ENCODE measurements at regions of chr16 and their contacts with region 1.

Region 1: DNA sequence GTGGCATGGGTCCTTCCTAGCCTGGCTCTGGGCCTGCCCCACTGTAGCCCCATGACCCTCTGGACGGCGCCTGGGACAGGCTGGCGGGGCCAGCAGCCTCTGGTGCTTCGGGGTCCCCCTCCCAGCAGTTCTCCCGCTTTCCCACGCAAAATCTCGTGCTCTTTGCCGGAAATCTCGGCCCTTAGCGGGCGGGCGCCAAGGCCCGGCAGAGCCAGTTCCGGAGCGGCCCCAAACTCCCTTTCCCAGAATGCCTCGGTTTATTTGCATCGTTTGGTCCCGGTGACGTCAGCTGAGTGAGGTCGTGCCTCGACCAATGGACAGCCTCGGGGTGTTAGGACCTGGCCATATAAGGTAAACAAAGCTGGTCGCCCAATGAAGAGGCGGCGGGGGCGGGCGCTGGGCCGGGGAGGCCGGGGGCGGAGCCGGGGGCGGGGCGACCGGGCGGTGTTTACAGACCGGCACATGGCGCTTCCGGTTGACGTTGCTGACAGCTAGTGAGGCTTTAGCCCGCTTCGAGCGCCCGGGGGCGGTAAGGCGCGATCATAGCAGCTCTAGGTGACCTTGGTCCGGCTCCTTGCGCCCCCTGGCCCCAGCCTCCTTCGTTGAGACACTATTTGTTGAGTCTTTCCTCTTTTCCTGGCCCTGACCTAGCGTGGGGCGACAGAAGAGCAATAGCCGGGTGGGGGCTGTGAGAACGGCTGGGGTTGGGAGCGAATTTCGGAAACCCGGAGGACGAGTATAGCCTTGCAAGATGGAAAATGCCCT is 1.5 kb upstream of the UBALD1 start:
- DNase-seq: peak; percentile 93 to 100 (median 98)
- ATAC-seq: peak; percentile 94
- H3K4me3 ChIP-seq: peak overlapping the region; percentile 95
- H3K4me3 Mint-ChIP-seq: peak overlapping the region; percentile 94 to 99 (median 98)
- H3K27ac ChIP-seq: peak overlapping the region; percentile 98
- H3K27ac Mint-ChIP-seq: peak overlapping the region; percentile 96 to 100 (median 99)
- H3K4me1 ChIP-seq: peaks cover 28 to 37% of the 10 kb centered on the region in 2 donors
- H3K4me1 Mint-ChIP-seq: peaks cover 8 to 43% (median 24%) of the 10 kb centered on the region in 7 donors
- H3K27me3 ChIP-seq: no peaks in the 10 kb centered on the region
- H3K27me3 Mint-ChIP-seq: no peaks in the 10 kb centered on the region

Region 2: GRCh38 chr16:4307215-4308037 is 308.8 kb before region 1 on chr16:
- CTCF ChIA-PET with region 1: no interaction called
- POLR2A ChIA-PET with region 1: no interaction called
- intact Hi-C with region 1: loop called in 1 of 2 experiments (anchors 1 kb)
- DNase-seq: peak; percentile 97 to 98 (median 97)
- ATAC-seq: peak; percentile 96
- H3K4me3 ChIP-seq: peak overlapping the region; percentile 94
- H3K4me3 Mint-ChIP-seq: peak overlapping the region; percentile 90 to 98 (median 94)
- H3K27ac ChIP-seq: peak overlapping the region; percentile 90
- H3K27ac Mint-ChIP-seq: peak overlapping the region; percentile 94 to 99 (median 95)
- H3K4me1 ChIP-seq: peaks cover 15 to 17% of the 10 kb centered on the region in 2 donors
- H3K4me1 Mint-ChIP-seq: peaks cover 13 to 30% (median 23%) of the 10 kb centered on the region in 7 donors
- H3K27me3 ChIP-seq: no peaks in the 10 kb centered on the region
- H3K27me3 Mint-ChIP-seq: peaks cover 0 to 2% (median 0%) of the 10 kb centered on the region in 5 donors

Region 3: GRCh38 chr16:4416200-4417032 is 199.8 kb before region 1 on chr16 and contains the start of gene CORO7:
- CTCF ChIA-PET with region 1: no interaction called
- POLR2A ChIA-PET with region 1: interaction called, 3 read pairs
- intact Hi-C with region 1: loop called (anchors 1 kb)
- DNase-seq: peak; percentile 98 to 100 (median 99)
- ATAC-seq: peak; percentile 89
- H3K4me3 ChIP-seq: peak within 1 kb of the TSS; percentile 71
- H3K4me3 Mint-ChIP-seq: peak within 1 kb of the TSS; percentile 88 to 98 (median 95)
- H3K27ac ChIP-seq: peak within 1 kb of the TSS; percentile 98
- H3K27ac Mint-ChIP-seq: peak within 1 kb of the TSS; percentile 91 to 99 (median 98)
- H3K4me1 ChIP-seq: peaks cover 26 to 33% of the 10 kb centered on the region in 2 donors
- H3K4me1 Mint-ChIP-seq: peaks cover 18 to 43% (median 38%) of the 10 kb centered on the region in 7 donors
- H3K27me3 ChIP-seq: no peaks in the 10 kb centered on the region
- H3K27me3 Mint-ChIP-seq: peaks cover 0 to 9% (median 0%) of the 10 kb centered on the region in 5 donors
- total RNA-seq, gene CORO7: 114 to 572 (median 165) TPM

Region 4: GRCh38 chr16:4506450-4506849 is 109.8 kb before region 1 on chr16:
- CTCF ChIA-PET with region 1: interaction called, 3 read pairs
- POLR2A ChIA-PET with region 1: interaction called, 5 read pairs
- intact Hi-C with region 1: loop called (anchors 2 to 5 kb)
- DNase-seq: peak in 8 of 9 donors; percentile 40 to 75 (median 65)
- ATAC-seq: peak; percentile 58
- H3K4me3 ChIP-seq: peak overlapping the region; percentile 55
- H3K4me3 Mint-ChIP-seq: peak overlapping the region; percentile 71 to 87 (median 80)
- H3K27ac ChIP-seq: peak overlapping the region; percentile 93
- H3K27ac Mint-ChIP-seq: peak overlapping the region; percentile 94 to 100 (median 99)
- H3K4me1 ChIP-seq: peaks cover 40 to 58% of the 10 kb centered on the region in 2 donors
- H3K4me1 Mint-ChIP-seq: peaks cover 39 to 77% (median 60%) of the 10 kb centered on the region in 7 donors
- H3K27me3 ChIP-seq: no peaks in the 10 kb centered on the region
- H3K27me3 Mint-ChIP-seq: no peaks in the 10 kb centered on the region

Region 5: GRCh38 chr16:4660454-4661007 is 44.3 kb after region 1 on chr16:
- CTCF ChIA-PET with region 1: interaction called, 3 read pairs
- POLR2A ChIA-PET with region 1: interaction called, 5 read pairs
- intact Hi-C with region 1: loop called in 1 of 2 experiments (anchors 2 kb)
- DNase-seq: peak in 8 of 9 donors; percentile 49 to 81 (median 73)
- ATAC-seq: peak; percentile 60
- H3K4me3 ChIP-seq: no peak overlapping the region
- H3K4me3 Mint-ChIP-seq: peak overlapping the region in 9 of 10 donors; percentile 48 to 78 (median 62)
- H3K27ac ChIP-seq: peak overlapping the region; percentile 74
- H3K27ac Mint-ChIP-seq: peak overlapping the region; percentile 88 to 96 (median 92)
- H3K4me1 ChIP-seq: peaks cover 34 to 65% of the 10 kb centered on the region in 2 donors
- H3K4me1 Mint-ChIP-seq: peaks cover 38 to 72% (median 64%) of the 10 kb centered on the region in 7 donors
- H3K27me3 ChIP-seq: no peaks in the 10 kb centered on the region
- H3K27me3 Mint-ChIP-seq: no peaks in the 10 kb centered on the region

Region 6: GRCh38 chr16:4766874-4767628 is 150.8 kb after region 1 on chr16 and contains the start of gene ZNF500:
- CTCF ChIA-PET with region 1: no interaction called
- POLR2A ChIA-PET with region 1: interaction called, 17 read pairs
- intact Hi-C with region 1: loop called (anchors 1 kb)
- DNase-seq: peak; percentile 90 to 98 (median 92)
- ATAC-seq: peak; percentile 99
- H3K4me3 ChIP-seq: peak within 1 kb of the TSS; percentile 82
- H3K4me3 Mint-ChIP-seq: peak within 1 kb of the TSS; percentile 90 to 94 (median 92)
- H3K27ac ChIP-seq: peak within 1 kb of the TSS; percentile 84
- H3K27ac Mint-ChIP-seq: peak within 1 kb of the TSS; percentile 86 to 96 (median 92)
- H3K4me1 ChIP-seq: peaks cover 17 to 19% of the 10 kb centered on the region in 2 donors
- H3K4me1 Mint-ChIP-seq: peaks cover 24 to 49% (median 34%) of the 10 kb centered on the region in 7 donors
- H3K27me3 ChIP-seq: no peaks in the 10 kb centered on the region
- H3K27me3 Mint-ChIP-seq: no peaks in the 10 kb centered on the region
- total RNA-seq, gene ZNF500: 13.8 to 43.0 (median 24.7) TPM

Measured in naive thymus-derived CD4-positive, alpha-beta T cell (primary cell).